Upper lobe of right lung (tissue), 1 donor: ENCODE measurements at regions of chr6 and their contacts with region 1.

Region 1: GRCh38 chr6:13795041-13795750 is 19.2 kb downstream of the MCUR1 start:
- DNase-seq: peak; percentile 84
- ATAC-seq: peak; percentile 96
- H3K4me3 ChIP-seq: no peak overlapping the region
- H3K27ac ChIP-seq: no peak overlapping the region
- H3K4me1 ChIP-seq: no peaks in the 10 kb centered on the region
- H3K27me3 ChIP-seq: no peaks in the 10 kb centered on the region
- CTCF ChIP-seq: peak; percentile 97

Region 2: GRCh38 chr6:14066782-14067406 is 271.7 kb after region 1 on chr6:
- intact Hi-C with region 1: loop called (anchors 10 kb)
- DNase-seq: no peak
- ATAC-seq: peak; percentile 93
- H3K4me3 ChIP-seq: no peak overlapping the region
- H3K27ac ChIP-seq: no peak overlapping the region
- H3K4me1 ChIP-seq: no peaks in the 10 kb centered on the region
- H3K27me3 ChIP-seq: peaks cover 6% of the 10 kb centered on the region
- CTCF ChIP-seq: peak; percentile 70